OCI-LY7 (cell line): ENCODE measurements at regions of chr10 and their contacts with region 1.

Region 1: DNA sequence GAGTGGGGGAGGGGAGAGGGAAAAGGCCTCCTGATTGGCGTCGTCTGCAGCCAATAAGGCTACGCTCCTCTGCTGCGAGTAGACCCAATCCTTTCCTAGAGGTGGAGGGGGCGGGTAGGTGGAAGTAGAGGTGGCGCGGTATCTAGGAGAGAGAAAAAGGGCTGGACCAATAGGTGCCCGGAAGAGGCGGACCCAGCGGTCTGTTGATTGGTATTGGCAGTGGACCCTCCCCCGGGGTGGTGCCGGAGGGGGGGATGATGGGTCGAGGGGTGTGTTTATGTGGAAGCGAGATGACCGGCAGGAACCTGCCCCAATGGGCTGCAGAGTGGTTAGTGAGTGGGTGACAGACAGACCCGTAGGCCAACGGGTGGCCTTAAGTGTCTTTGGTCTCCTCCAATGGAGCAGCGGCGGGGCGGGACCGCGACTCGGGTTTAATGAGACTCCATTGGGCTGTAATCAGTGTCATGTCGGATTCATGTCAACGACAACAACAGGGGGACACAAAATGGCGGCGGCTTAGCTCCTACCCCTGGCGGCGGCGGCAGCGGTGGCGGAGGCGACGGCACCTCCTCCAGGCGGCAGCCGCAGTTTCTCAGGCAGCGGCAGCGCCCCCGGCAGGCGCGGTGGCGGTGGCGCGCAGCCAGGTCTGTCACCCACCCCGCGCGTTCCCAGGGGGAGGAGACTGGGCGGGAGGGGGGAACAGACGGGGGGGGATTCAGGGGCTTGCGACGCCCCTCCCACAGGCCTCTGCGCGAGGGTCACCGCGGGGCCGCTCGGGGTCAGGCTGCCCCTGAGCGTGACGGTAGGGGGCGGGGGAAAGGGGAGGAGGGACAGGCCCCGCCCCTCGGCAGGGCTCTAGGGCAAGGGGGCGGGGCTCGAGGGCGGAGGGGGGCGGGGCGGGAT is at the start of gene KAT6B:
- DNase-seq: peak; percentile 100
- H3K4me3 ChIP-seq: peak within 1 kb of the TSS; percentile 81
- H3K27ac ChIP-seq: peak within 1 kb of the TSS; percentile 83
- H3K4me1 ChIP-seq: peaks cover 23% of the 10 kb centered on the region
- CTCF ChIP-seq: peak; percentile 53
- total RNA-seq, gene KAT6B: 20.8 and 20.9 TPM in 2 replicates

Region 2: DNA sequence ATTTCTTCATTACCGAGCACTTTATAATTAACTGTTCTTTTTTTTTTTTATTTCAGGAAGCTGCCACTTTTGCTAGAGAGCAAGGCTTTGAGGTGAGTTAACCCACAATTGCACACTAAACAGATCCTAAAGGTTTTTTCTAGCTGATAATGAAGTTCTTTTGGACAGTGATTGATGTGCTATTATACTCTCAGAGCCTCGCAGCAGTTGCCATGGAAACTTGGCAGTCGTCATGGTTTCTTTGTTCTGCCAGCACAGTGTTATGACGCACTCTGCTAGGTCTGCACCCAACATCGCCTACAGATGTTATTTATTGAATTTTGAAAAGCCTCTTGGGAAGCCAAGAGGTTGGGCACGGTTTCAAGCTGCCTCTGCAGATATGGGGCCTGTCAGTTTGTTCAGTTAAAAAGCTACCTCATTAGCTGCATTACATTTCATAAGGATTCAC is 237.1 kb before region 1 on chr10:
- CTCF ChIA-PET with region 1: no interaction called
- POLR2A ChIA-PET with region 1: no interaction called
- intact Hi-C with region 1: loop called (anchors 10 kb)
- DNase-seq: peak; percentile 80
- H3K4me3 ChIP-seq: no peak overlapping the region
- H3K27ac ChIP-seq: peak overlapping the region; percentile 1
- H3K4me1 ChIP-seq: peaks cover 34% of the 10 kb centered on the region
- CTCF ChIP-seq: no peak

Region 3: DNA sequence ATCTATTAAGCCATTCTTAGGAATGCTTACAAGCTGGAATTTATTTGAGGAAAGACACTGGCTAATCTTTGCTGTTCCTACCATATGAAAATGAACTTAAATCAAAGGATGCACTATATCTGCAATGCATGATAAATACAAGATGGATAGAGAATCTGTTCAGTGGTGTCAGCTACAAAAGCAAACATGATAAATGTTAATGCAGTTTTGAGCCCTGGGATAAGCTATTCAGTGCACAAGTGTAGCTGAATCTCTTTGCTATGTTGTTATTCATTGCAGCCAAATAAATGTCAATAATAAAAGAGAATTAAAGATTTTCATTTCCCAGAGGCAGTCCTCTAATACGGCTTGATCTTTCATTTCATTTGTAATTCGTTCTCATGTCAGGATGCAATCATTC is 223.8 kb before region 1 on chr10:
- CTCF ChIA-PET with region 1: no interaction called
- POLR2A ChIA-PET with region 1: no interaction called
- intact Hi-C with region 1: no loop called
- DNase-seq: no peak
- H3K4me3 ChIP-seq: no peak overlapping the region
- H3K27ac ChIP-seq: no peak overlapping the region
- H3K4me1 ChIP-seq: no peaks in the 10 kb centered on the region
- CTCF ChIP-seq: no peak

Region 4: GRCh38 chr10:74738985-74739567 is 87.3 kb before region 1 on chr10:
- CTCF ChIA-PET with region 1: interaction called, 3 read pairs
- POLR2A ChIA-PET with region 1: no interaction called
- intact Hi-C with region 1: loop called (anchors 1 kb)
- DNase-seq: peak; percentile 85
- H3K4me3 ChIP-seq: peak overlapping the region; percentile 29
- H3K27ac ChIP-seq: peak overlapping the region; percentile 55
- H3K4me1 ChIP-seq: peaks cover 24% of the 10 kb centered on the region
- CTCF ChIP-seq: peak; percentile 69

Region 5: GRCh38 chr10:74855027-74855426 is 28.6 kb after region 1 on chr10:
- CTCF ChIA-PET with region 1: interaction called, 5 read pairs
- POLR2A ChIA-PET with region 1: interaction called, 5 read pairs
- intact Hi-C with region 1: loop called (anchors 2 kb)
- DNase-seq: peak; percentile 66
- H3K4me3 ChIP-seq: peak overlapping the region; percentile 46
- H3K27ac ChIP-seq: peak overlapping the region; percentile 71
- H3K4me1 ChIP-seq: peaks cover 40% of the 10 kb centered on the region
- CTCF ChIP-seq: no peak

Region 6: GRCh38 chr10:75111367-75111906 is 285.0 kb after region 1 on chr10 and contains the start of gene SAMD8:
- CTCF ChIA-PET with region 1: no interaction called
- POLR2A ChIA-PET with region 1: no interaction called
- intact Hi-C with region 1: loop called (anchors 5 kb)
- DNase-seq: peak; percentile 96
- H3K4me3 ChIP-seq: peak within 1 kb of the TSS; percentile 93
- H3K27ac ChIP-seq: peak within 1 kb of the TSS; percentile 93
- H3K4me1 ChIP-seq: peaks cover 20% of the 10 kb centered on the region
- CTCF ChIP-seq: peak; percentile 43
- total RNA-seq, gene SAMD8: 8.3 and 8.8 TPM in 2 replicates